HEK293 (cell line): ENCODE measurements at regions of chr11 and their contacts with region 1.

Region 1: GRCh38 chr11:114262681-114263512 is 33.3 kb upstream of the NNMT start:
- H3K4me3 ChIP-seq: no peak overlapping the region
- H3K27ac ChIP-seq: no peak overlapping the region
- H3K4me1 ChIP-seq: no peaks in the 10 kb centered on the region
- CTCF ChIP-seq: peak; percentile 73

Region 2: DNA sequence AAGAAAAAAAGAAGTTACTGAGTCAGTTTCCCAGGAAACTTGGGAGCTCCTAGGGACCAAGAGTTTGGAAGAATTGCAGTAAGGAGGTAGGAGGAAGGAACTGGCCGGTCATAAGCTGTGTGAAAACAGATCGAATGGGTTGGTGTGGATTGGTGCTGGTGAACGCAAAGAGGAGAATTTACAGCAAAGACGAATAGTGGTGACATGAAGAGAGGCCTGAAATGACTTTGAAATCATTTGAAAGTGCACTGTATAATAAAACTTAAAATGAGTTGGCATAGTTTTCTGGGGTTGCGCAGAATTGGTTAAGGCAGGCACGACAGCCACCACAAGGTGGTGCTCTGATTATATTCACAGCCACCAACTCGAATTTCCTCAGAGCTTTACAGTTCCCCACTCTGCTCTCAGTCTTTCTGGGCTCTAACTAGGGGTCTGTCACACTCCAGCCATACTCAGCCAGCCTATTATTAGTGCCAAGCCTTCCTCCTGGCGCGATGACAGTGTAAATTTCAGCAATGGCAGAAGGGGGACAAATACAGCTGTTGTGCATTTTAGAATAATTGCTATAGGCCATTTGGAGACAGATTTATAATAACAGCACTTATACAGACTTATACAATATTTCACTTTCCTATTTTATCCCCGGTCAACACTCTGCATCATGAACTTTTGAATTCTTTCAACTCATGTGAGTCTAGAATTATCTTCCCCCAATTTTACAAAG is 366.6 kb before region 1 on chr11:
- CTCF ChIA-PET with region 1: interaction called, 138 read pairs
- POLR2A ChIA-PET with region 1: interaction called, 3 read pairs
- H3K4me3 ChIP-seq: no peak overlapping the region
- H3K27ac ChIP-seq: peak overlapping the region; percentile 2; the same call in 1 of the 2 replicates
- H3K4me1 ChIP-seq: no peaks in the 10 kb centered on the region; the same call in 1 of the 2 replicates
- CTCF ChIP-seq: peak; percentile 59

Region 3: GRCh38 chr11:113994077-113994954 is 268.6 kb before region 1 on chr11:
- CTCF ChIA-PET with region 1: interaction called, 392 read pairs
- POLR2A ChIA-PET with region 1: no interaction called
- H3K4me3 ChIP-seq: no peak overlapping the region
- H3K27ac ChIP-seq: no peak overlapping the region
- H3K4me1 ChIP-seq: no peaks in the 10 kb centered on the region
- CTCF ChIP-seq: peak; percentile 13; the same call in 1 of the 2 replicates

Region 4: GRCh38 chr11:114036156-114036811 is 226.6 kb before region 1 on chr11:
- CTCF ChIA-PET with region 1: interaction called, 86 read pairs
- POLR2A ChIA-PET with region 1: no interaction called
- H3K4me3 ChIP-seq: peak overlapping the region; percentile 32
- H3K27ac ChIP-seq: no peak overlapping the region; the same call in 1 of the 2 replicates
- H3K4me1 ChIP-seq: 0 out of 2 replicates have a peak, but pooled peaks cover 5% of the 10 kb centered on the region
- CTCF ChIP-seq: peak; percentile 95

Region 5: DNA sequence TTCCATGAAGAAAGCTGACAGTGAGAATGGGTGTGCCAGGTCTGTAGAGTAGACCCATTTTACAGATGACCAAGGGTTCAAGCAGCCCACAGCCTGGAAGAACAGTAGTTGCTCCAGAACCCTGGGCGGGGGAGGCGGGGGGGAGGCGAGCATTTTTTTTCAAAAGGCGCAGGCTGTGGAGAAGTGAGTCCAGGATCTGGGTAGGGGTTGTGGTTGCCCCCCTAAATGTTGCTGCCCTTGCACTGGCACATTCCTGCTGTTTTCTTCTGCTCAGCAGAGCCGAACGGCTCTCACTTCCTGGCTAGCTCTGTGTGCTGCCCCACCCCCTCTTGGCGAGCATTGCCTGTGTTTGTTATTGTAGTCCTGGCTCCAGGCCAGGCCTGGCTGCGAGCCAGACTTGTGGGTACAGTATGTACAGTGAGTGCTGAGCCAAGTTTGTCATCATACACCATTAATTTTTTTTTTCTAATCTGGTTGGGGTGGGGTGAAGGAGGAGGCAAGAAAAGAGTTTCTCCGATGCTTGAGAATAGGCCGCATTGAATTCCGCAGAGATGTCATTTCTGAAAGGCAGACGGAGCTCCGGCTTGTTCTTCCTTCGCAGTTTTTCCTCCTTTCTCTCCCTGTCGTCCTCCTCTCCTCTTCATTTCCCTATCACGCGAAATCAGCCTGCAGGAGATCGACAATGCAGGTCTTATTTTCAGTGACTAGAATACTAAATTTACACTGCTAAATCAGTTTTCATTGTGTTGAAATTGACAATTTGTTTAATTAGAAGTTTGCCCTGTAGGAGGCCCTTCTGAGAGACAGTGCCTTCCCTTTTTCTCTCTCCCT is 102.9 kb before region 1 on chr11:
- CTCF ChIA-PET with region 1: interaction called, 17 read pairs
- POLR2A ChIA-PET with region 1: interaction called, 3 read pairs
- H3K4me3 ChIP-seq: no peak overlapping the region
- H3K27ac ChIP-seq: peak overlapping the region; percentile 33
- H3K4me1 ChIP-seq: peaks cover 15% of the 10 kb centered on the region
- CTCF ChIP-seq: no peak

Region 6: DNA sequence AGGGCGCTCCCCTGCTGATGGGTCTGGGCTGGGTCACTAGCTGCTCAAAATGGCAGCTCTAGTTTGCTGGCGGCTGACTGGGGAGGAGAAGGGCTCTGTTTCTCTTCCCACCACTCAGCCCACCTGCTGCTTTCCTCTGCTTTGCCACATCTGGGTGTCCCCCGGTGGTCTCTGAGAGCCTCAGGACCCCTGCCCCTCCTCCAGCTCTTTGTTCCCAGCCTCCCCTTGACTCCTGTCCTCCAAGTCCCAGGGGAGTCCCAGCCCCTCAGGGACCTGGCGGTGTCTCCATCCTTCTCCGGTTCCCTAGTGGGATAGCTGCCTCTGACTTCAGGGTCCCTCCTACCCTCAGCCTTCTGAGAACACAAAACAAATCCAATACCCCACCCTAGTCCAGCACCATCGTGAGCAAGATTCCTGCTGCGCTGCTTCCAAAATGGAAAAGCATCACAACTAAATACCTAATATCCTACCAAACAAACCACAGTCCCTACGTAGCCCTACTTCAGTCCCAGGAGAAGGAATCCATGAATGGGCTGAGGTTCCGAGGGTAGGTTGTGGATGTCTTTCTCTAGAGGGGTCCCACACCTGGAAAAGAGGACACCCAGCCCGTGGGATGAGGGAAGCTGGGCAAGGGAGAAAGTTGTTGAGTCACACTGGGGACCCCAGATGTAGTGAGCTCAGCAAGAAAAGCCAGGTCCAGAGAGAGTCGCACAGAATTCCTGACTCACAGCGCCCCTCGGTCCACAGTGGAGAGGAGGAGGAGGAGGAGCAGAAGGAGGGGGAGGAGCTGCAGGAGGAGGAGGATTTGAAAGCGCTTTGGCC is 11.7 kb before region 1 on chr11:
- CTCF ChIA-PET with region 1: interaction called, 35 read pairs
- POLR2A ChIA-PET with region 1: no interaction called
- H3K4me3 ChIP-seq: no peak overlapping the region
- H3K27ac ChIP-seq: no peak overlapping the region
- H3K4me1 ChIP-seq: no peaks in the 10 kb centered on the region
- CTCF ChIP-seq: no peak

Region 7: DNA sequence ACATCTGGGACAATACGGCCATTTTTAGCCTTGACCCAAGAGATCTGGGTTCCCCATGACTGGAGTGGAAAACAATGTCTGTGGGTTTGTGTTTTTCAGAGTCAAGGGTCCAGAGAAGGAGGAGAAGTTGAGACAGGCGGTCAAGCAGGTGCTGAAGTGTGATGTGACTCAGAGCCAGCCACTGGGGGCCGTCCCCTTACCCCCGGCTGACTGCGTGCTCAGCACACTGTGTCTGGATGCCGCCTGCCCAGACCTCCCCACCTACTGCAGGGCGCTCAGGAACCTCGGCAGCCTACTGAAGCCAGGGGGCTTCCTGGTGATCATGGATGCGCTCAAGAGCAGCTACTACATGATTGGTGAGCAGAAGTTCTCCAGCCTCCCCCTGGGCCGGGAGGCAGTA is 49.0 kb after region 1 on chr11:
- CTCF ChIA-PET with region 1: no interaction called
- POLR2A ChIA-PET with region 1: no interaction called
- H3K4me3 ChIP-seq: no peak overlapping the region
- H3K27ac ChIP-seq: no peak overlapping the region
- H3K4me1 ChIP-seq: no peaks in the 10 kb centered on the region
- CTCF ChIP-seq: no peak

Region 8: DNA sequence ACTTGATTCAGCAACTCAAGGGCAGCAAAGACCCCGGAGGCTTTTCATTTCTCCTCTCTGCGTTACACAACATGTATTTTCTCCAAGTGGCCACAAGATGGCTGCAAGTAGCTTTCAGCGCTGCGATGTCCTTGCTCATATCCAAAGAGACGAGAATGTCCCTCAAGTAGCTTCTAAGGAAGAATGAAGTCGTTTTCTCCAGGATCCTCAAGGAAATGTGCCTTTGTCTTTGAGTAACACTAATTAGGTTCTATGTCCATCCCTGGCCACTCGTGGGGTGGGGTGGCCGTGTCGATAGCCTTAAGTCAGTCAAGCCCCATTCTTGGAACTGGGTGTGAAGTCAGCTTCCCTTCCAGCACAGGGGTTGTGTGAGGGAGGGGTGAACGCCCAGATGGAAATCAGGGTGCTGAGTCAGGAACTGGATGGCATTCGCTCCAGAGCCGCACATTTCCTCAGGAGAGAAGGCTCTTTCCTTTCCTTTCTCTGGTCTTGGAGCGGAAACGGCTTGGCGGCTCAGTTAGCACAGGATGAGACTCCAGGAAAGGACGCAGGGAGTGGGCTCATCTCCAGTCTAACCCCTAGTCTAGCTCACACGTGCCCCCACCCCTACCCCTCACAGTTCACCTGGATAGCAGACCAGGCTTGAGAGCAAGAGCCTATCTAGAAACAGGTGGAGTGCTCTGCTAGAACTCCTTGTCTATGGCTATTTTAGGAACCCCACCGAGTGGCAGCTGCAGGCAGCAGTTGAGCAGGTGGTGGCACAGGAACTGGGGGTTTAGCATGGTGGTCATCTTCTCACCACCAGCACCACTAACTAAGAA is 77.6 kb after region 1 on chr11:
- CTCF ChIA-PET with region 1: no interaction called
- POLR2A ChIA-PET with region 1: no interaction called
- H3K4me3 ChIP-seq: no peak overlapping the region
- H3K27ac ChIP-seq: no peak overlapping the region
- H3K4me1 ChIP-seq: no peaks in the 10 kb centered on the region
- CTCF ChIP-seq: peak; percentile 50; the same call in 1 of the 2 replicates

Region 9: GRCh38 chr11:114622858-114623257 is 360.0 kb after region 1 on chr11:
- CTCF ChIA-PET with region 1: no interaction called
- POLR2A ChIA-PET with region 1: no interaction called
- H3K4me3 ChIP-seq: no peak overlapping the region
- H3K27ac ChIP-seq: no peak overlapping the region
- H3K4me1 ChIP-seq: no peaks in the 10 kb centered on the region
- CTCF ChIP-seq: no peak